H1 (cell line): ENCODE measurements at regions of chr12 and their contacts with region 1.

Region 1: DNA sequence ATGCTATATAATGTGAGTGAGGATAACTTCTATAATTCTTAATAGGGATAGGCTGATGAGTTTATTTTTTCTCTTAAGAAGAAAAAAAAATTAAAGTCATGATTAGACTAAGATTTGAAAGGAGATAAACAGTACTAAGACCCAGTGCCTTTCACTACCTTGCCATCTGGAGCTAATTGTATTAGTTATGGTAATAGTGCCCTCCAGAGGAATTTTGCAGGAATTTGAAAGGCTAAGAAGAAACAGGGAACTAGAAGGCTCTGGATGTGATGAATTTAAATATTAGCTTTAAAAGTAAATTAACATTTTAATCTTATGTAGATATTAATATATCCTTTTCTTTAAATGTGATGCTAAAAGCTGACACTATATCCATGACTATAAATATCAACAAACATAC is 36.6 kb upstream of the PIK3C2G start:
- DNase-seq: peak in 1 of 2 experiments; percentile 10
- H3K4me3 ChIP-seq: no peak overlapping the region
- H3K27ac ChIP-seq: no peak overlapping the region
- H3K4me1 ChIP-seq: no peaks in the 10 kb centered on the region
- H3K27me3 ChIP-seq: peaks cover 0 to 1% (median 0%) of the 10 kb centered on the region in 4 experiments; a peak in 1 of 7 replicates
- CTCF ChIP-seq: peak in 2 of 3 experiments; percentile 43 to 57; a peak in 2 of 4 replicates
- EP300 ChIP-seq: no peak
- POLR2A ChIP-seq: no peak
- RAD21 ChIP-seq: peak; percentile 79 to 81

Region 2: DNA sequence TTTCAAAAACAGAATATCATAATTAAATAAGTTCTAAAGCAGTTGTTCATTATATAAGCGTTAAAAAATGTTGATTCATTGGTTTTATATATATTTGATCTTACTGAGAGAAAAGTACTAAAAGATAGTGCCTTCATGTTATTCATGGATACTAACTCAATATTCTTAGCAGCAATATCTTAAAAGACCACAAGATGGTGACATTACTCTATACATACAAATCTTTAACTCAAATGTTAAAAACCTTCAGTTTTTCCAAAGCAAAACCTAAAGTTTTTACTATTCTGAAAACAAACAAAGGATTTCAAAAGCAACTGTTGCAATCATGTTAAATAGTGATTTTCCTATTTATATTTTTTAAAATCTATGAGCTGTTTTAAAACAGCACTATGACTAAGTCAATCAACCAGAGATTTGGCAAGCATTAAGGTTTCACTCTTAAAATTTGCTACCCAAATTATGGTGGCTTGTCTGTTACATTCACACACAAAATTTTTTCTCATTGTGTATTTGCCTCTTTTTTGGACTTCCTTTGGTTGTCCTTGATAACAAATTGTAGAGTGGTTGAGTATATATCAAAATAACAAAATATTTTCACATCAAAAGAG is 84.7 kb before region 1 on chr12:
- CTCF ChIA-PET with region 1: interaction called, 35 read pairs
- POLR2A ChIA-PET with region 1: no interaction called
- DNase-seq: no peak
- H3K4me3 ChIP-seq: no peak overlapping the region
- H3K27ac ChIP-seq: no peak overlapping the region
- H3K4me1 ChIP-seq: no peaks in the 10 kb centered on the region
- H3K27me3 ChIP-seq: no peaks in the 10 kb centered on the region
- CTCF ChIP-seq: peak in 1 of 3 experiments; percentile 39; a peak in 2 of 4 replicates
- EP300 ChIP-seq: no peak
- POLR2A ChIP-seq: no peak
- RAD21 ChIP-seq: peak in 1 of 2 experiments; percentile 65; a peak in 3 of 4 replicates

Region 3: DNA sequence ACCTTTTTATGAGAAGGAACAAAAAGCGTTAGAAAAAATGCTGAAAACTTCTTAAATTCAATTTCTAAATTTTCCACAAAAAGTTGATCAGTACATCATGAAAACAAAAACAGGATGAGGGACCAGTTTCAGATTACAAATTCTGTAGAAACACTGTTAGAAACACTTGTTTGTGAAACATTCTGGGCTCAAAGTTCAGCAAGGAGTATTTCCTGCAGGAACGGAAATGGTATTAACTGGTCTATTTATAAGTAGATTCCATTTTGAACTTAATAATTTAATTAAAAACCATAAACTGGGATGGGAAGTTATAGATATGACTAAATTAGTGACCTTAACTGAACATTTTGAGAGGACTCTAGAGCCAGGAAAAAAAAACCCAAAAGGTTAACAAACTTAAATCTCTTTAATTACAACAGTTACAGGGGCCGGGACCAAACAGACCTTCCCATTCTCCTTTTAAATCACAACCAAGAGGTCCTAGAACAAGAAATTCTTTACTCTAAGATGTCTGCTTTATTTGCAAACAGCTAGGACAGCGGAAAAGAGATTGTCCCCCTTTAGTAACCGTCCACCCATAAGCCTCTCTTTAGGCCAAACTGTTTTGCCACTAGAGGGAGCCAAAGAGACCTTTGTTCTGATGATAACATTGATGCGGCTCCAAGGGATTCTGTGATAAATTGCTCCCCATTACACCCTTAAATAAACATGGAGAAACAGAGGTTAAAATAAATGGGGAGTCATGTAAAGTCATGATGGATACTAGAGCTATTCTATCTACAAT is 65.8 kb before region 1 on chr12:
- CTCF ChIA-PET with region 1: interaction called, 19 read pairs
- POLR2A ChIA-PET with region 1: no interaction called
- DNase-seq: peak in 1 of 2 experiments; percentile 54
- H3K4me3 ChIP-seq: no peak overlapping the region
- H3K27ac ChIP-seq: no peak overlapping the region
- H3K4me1 ChIP-seq: peaks cover 0 to 3% (median under 1%) of the 10 kb centered on the region in 4 experiments; a peak in 3 of 7 replicates
- H3K27me3 ChIP-seq: no peaks in the 10 kb centered on the region
- CTCF ChIP-seq: peak in 2 of 3 experiments; percentile 63 to 84; a peak in 3 of 4 replicates
- EP300 ChIP-seq: no peak
- POLR2A ChIP-seq: no peak
- RAD21 ChIP-seq: peak; percentile 40 to 59